ENCODE measurements at regions of chr1 and their contacts with region 1.

Region 1: DNA sequence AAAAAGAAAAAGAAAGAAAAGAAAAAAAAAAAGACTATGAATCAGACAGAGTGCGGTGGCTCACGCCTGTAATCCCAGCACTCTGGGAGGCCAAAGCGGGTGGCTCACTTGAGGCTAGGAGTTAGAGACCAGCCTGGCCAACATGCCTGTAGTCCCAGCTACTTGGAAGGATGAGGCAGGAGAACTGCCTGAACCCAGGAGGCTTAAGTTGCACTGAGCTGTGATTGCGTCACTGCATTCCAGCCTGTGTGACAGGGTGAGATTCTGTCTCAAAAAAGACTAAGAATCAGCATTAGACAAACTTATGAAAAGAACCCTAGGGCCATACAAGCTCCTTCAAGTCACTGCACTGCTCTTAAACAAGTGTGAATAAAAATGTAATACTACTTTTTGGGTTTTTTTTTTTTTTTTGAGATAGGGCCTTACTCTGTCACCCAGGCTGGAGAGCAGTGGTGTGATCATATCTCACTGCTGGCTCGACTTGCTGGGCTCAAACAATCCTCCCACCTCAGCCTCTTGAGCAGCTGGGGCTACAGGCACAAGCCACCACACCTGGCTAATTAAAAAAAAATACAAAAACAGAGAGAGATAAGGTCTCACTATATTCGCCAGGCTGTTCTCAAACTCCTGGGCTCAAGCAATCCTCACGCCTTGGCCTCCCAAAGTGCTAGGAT is 17.0 kb downstream of the PSMB4 start:
- DNase-seq: peak; percentile 71
- H3K4me3 ChIP-seq: no peak overlapping the region
- H3K27me3 ChIP-seq: no peaks in the 10 kb centered on the region
- CTCF ChIP-seq: no peak

Region 2: GRCh38 chr1:151759241-151759640 is 342.9 kb after region 1 on chr1:
- CTCF ChIA-PET with region 1: no interaction called
- POLR2A ChIA-PET with region 1: interaction called, 19 read pairs
- DNase-seq: no peak
- H3K4me3 ChIP-seq: no peak overlapping the region
- H3K27me3 ChIP-seq: no peaks in the 10 kb centered on the region
- CTCF ChIP-seq: no peak